ENCODE measurements at regions of chr2 and their contacts with region 1.

Region 1: DNA sequence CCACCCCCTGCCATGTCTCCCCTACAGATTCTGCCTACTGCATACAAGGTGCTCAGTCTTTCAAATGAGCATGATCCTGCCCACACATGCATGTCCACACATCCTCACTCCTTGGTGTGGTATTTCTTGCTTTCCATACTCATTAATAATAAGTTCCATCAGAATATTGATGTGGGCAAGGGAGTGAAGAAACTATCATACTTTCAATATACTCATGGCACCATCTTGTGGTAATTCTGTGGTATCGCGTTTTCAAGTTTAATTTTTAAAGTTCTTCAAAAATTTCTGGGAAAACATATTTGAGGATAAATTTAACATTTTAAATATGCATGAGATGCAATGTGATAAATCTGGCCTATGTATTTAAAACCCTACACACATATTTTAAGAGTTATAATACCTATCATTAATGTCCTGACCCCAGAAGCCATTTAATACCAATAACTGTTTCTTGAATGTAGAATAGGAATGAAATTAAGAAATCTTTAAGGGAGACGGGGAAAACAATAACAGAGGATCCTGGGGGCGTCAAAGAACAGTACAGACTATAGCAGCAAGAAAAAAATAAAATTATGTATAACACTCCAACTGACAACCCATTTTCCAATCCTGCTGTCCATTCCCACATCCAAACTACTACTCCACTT is 110.1 kb downstream of the ZNF385B start:
- DNase-seq: peak in 1 of 2 donors; percentile 39
- H3K4me3 ChIP-seq: no peak overlapping the region
- H3K27ac ChIP-seq: no peak overlapping the region
- H3K4me1 ChIP-seq: no peaks in the 10 kb centered on the region
- H3K27me3 ChIP-seq: no peaks in the 10 kb centered on the region
- CTCF ChIP-seq: peak in 5 of 7 experiments; percentile 30 to 62 (median 54)
- EP300 ChIP-seq: no peak
- POLR2A ChIP-seq: no peak

Region 2: GRCh38 chr2:179181002-179181401 is 570.3 kb before region 1 on chr2:
- intact Hi-C with region 1: no loop called
- DNase-seq: no peak
- H3K4me3 ChIP-seq: no peak overlapping the region
- H3K27ac ChIP-seq: no peak overlapping the region
- H3K4me1 ChIP-seq: peaks cover 0 to 16% (median 0%) of the 10 kb centered on the region in 4 donors
- H3K27me3 ChIP-seq: no peaks in the 10 kb centered on the region
- CTCF ChIP-seq: no peak
- EP300 ChIP-seq: no peak
- POLR2A ChIP-seq: no peak

Region 3: GRCh38 chr2:179422037-179422643 is 329.1 kb before region 1 on chr2:
- intact Hi-C with region 1: loop called (anchors 5 kb)
- DNase-seq: peak; percentile 80 to 88
- H3K4me3 ChIP-seq: no peak overlapping the region
- H3K27ac ChIP-seq: no peak overlapping the region
- H3K4me1 ChIP-seq: peaks cover 0 to 4% (median 0%) of the 10 kb centered on the region in 4 donors
- H3K27me3 ChIP-seq: no peaks in the 10 kb centered on the region
- CTCF ChIP-seq: peak in 5 of 7 experiments; percentile 59 to 73 (median 67)
- EP300 ChIP-seq: no peak
- POLR2A ChIP-seq: no peak